Right cardiac atrium (tissue), 5 donors: ENCODE measurements at regions of chr2 and their contacts with region 1.

Region 1: DNA sequence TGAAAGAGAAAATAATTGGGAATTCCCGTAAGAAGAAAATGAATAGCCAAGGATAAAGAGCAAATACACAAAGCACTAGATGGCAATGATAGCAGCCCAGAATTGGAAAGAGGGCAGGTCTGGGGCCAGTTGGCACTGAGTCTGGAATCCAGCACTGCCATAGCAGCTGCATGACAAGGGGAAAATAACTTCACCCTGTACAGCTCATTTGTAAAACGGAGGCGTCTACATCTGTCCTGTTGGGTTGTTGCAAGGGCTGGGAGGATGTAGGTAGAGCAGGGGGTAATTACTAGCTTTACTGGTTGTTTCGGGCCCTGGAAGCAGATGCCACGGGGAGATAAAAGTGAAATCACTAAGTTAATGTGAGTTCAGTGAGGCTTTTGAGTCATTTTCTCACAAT is 110.0 kb upstream of the RASGRP3 start:
- DNase-seq: peak; percentile 29 to 66 (median 65)
- ATAC-seq: peak; percentile 70 to 81
- H3K4me3 ChIP-seq: no peak overlapping the region
- H3K27ac ChIP-seq: peak overlapping the region; percentile 12
- H3K4me1 ChIP-seq: peaks cover 3% of the 10 kb centered on the region
- H3K27me3 ChIP-seq: no peaks in the 10 kb centered on the region

Region 2: GRCh38 chr2:32918774-32919173 is 447.7 kb before region 1 on chr2:
- intact Hi-C with region 1: no loop called
- DNase-seq: no peak
- ATAC-seq: no peak
- H3K4me3 ChIP-seq: no peak overlapping the region
- H3K27ac ChIP-seq: no peak overlapping the region
- H3K4me1 ChIP-seq: no peaks in the 10 kb centered on the region
- H3K27me3 ChIP-seq: no peaks in the 10 kb centered on the region

Region 3: DNA sequence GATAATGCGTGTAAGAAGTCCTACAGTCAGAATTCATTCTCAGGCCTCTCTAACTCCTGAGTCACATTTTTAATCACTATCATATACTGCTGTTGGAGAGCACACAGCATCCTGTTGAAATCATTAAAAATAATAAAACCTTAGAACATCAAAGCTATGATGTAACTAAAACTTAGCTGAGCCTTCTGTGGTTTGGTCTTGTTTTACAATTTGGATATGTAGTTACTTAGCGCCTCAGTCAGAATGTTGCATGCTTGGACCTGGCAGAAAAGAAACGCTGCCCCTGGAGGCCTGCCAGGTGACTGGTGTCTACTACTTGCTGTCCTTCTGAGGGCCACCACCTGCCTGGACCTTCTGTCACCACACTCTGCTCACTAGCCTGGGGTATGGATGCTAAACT is 151.2 kb before region 1 on chr2:
- intact Hi-C with region 1: no loop called
- DNase-seq: peak; percentile 69 to 85 (median 84)
- ATAC-seq: peak in 1 of 2 donors; percentile 10
- H3K4me3 ChIP-seq: no peak overlapping the region
- H3K27ac ChIP-seq: no peak overlapping the region
- H3K4me1 ChIP-seq: peaks cover 12% of the 10 kb centered on the region
- H3K27me3 ChIP-seq: no peaks in the 10 kb centered on the region

Region 4: GRCh38 chr2:33354981-33355380 is 11.5 kb before region 1 on chr2:
- intact Hi-C with region 1: loop called in 1 of 4 experiments (anchors 1 kb)
- DNase-seq: no peak
- ATAC-seq: no peak
- H3K4me3 ChIP-seq: no peak overlapping the region
- H3K27ac ChIP-seq: no peak overlapping the region
- H3K4me1 ChIP-seq: no peaks in the 10 kb centered on the region
- H3K27me3 ChIP-seq: no peaks in the 10 kb centered on the region